K562 (cell line): ENCODE measurements at regions of chr2 and their contacts with region 1.

Region 1: DNA sequence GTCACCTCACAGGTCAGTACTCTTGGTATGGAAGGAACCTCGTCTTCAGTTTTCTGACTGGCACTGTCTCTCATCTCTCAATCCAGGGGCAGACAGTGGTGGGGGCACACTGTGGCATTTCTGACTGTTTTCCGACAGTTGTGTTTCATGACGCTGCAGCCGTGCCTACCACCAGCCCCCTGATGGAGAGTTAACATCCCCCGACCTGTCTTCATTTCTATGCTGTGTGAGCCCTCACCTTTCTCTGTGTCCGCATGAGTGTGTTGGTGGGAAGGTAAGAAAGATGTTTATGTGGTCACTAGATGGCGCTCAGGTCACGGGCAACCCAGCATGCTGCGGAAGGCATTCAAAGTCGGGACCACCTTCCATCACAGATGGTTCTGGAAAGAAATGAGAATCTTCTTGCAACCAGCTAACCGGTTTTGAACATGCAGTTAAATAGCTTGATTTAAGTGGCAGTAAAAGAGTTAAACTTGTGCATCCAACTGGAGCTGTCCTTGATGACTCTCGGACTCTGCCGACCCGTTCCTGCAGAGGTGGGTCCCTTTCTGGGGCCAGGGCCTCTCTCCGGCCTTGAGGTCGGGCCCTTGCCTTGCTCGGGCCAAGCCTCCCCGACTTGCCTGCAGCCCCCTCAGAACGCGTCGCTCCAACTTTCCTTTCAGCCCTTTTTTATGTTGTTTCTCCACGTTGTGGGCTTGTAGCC is 92.4 kb downstream of the DYSF start:
- DNase-seq: peak; percentile 63 to 74 (median 64)
- ATAC-seq: peak; percentile 93
- H3K4me3 ChIP-seq: no peak overlapping the region
- H3K27ac ChIP-seq: no peak overlapping the region
- H3K4me1 ChIP-seq: 0 out of 5 replicates have a peak, but pooled peaks cover 0 to 3% of the 10 kb centered on the region in 2 experiments
- H3K27me3 ChIP-seq: peaks cover 7 to 30% of the 10 kb centered on the region in 2 experiments; a peak in 4 of 5 replicates
- CTCF ChIP-seq: peak; percentile 80 to 89 (median 81)
- EP300 ChIP-seq: no peak
- POLR2A ChIP-seq: no peak
- RAD21 ChIP-seq: peak; percentile 82 to 84

Region 2: DNA sequence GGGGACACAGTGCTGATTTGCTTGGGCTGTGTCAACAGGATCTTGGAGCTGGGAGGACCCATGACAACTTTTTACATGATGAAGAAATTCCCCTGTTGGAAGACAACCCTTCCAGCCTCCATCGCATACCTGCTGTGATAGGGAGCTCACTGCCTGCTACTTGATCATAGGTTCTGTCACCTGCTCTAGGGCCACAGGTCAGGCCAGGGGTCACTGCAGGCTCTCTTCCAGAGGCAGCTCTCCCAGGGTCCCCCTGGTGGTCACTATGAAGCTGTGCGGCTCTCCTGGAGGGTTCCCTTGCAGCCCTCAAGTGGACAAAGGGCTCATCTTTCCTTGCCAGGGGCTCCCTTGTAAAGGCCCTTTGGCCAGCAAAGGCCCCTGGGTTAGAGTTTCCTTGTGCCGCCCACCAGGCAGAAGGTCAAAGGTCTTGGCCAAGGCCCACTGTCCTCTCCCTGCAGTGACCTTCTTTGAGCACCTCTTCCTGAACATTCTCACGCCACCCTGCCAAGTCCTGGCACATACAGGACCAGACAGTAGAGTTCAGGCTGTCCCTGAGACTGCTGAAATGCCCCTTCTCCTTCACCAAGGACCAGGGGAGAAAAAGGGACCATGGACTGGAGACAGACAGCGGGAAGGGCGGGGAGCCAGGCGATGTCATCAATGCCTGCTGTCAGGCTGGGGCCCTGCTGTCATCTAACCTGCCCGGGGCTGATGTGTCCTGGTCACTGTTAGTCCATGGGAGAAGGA is 252.7 kb after region 1 on chr2:
- CTCF ChIA-PET with region 1: interaction called, 5 read pairs
- POLR2A ChIA-PET with region 1: no interaction called
- in situ Hi-C with region 1: no loop called
- intact Hi-C with region 1: loop called (anchors 2 kb)
- DNase-seq: peak; percentile 71 to 87 (median 79)
- ATAC-seq: peak; percentile 97
- H3K4me3 ChIP-seq: no peak overlapping the region
- H3K27ac ChIP-seq: no peak overlapping the region
- H3K4me1 ChIP-seq: no peaks in the 10 kb centered on the region
- H3K27me3 ChIP-seq: peaks cover 0 to 14% of the 10 kb centered on the region in 2 experiments; a peak in 1 of 5 replicates
- CTCF ChIP-seq: peak; percentile 89 to 97 (median 93)
- EP300 ChIP-seq: no peak
- POLR2A ChIP-seq: no peak
- RAD21 ChIP-seq: peak; percentile 83 to 94

Region 3: GRCh38 chr2:72137498-72138010 is 591.8 kb after region 1 on chr2:
- CTCF ChIA-PET with region 1: interaction called, 6 read pairs
- POLR2A ChIA-PET with region 1: no interaction called
- in situ Hi-C with region 1: no loop called
- intact Hi-C with region 1: loop called (anchors 5 kb)
- DNase-seq: peak; percentile 77 to 89 (median 86)
- ATAC-seq: peak; percentile 98
- H3K4me3 ChIP-seq: no peak overlapping the region
- H3K27ac ChIP-seq: no peak overlapping the region
- H3K4me1 ChIP-seq: peaks cover 0 to 14% of the 10 kb centered on the region in 2 experiments; a peak in 2 of 5 replicates
- H3K27me3 ChIP-seq: peaks cover 0 to 29% of the 10 kb centered on the region in 2 experiments; a peak in 2 of 5 replicates
- CTCF ChIP-seq: peak; percentile 90 to 98 (median 98)
- EP300 ChIP-seq: no peak
- POLR2A ChIP-seq: no peak
- RAD21 ChIP-seq: peak; percentile 68 to 83

Region 4: GRCh38 chr2:72278046-72278445 is 732.3 kb after region 1 on chr2:
- CTCF ChIA-PET with region 1: no interaction called
- POLR2A ChIA-PET with region 1: no interaction called
- in situ Hi-C with region 1: no loop called
- intact Hi-C with region 1: no loop called
- DNase-seq: no peak
- ATAC-seq: no peak
- H3K4me3 ChIP-seq: no peak overlapping the region
- H3K27ac ChIP-seq: no peak overlapping the region
- H3K4me1 ChIP-seq: no peaks in the 10 kb centered on the region
- H3K27me3 ChIP-seq: no peaks in the 10 kb centered on the region
- CTCF ChIP-seq: no peak
- EP300 ChIP-seq: no peak
- POLR2A ChIP-seq: no peak
- RAD21 ChIP-seq: no peak

Region 5: DNA sequence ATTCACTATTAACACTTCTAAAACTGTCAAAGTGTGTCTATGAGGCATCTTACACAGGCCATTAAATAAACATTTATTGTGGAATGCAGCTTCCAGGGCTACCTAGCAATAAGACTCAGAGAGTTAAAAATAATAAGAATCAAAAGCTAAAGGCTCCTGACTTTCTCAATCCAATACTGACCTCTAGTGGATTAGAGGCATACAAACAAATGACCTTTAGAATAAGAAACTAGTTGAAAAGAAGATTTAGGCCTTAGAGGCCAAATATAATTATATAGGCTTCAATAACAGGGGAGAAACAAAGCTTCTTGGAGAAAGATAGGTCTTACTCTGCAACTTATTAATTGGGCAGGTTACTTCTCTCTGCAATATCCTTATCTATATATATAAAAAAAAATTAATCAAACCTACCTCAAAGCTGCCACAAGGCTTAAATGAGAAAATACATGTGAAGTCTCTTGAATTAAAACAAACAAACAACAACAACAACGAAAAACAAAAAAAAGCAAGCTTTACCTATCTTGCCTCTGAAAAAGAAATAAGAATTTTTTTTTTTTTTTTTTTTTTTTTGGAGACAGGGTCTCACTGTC is 1034.0 kb after region 1 on chr2:
- CTCF ChIA-PET with region 1: interaction called, 3 read pairs
- POLR2A ChIA-PET with region 1: no interaction called
- in situ Hi-C with region 1: loop called (anchors 25 kb)
- intact Hi-C with region 1: loop called (anchors 10 kb)
- DNase-seq: peak in 3 of 4 experiments; percentile 7 to 62 (median 17)
- ATAC-seq: peak; percentile 77
- H3K4me3 ChIP-seq: no peak overlapping the region
- H3K27ac ChIP-seq: no peak overlapping the region
- H3K4me1 ChIP-seq: no peaks in the 10 kb centered on the region
- H3K27me3 ChIP-seq: no peaks in the 10 kb centered on the region
- CTCF ChIP-seq: peak; percentile 49 to 81 (median 54); a peak in 4 of 6 replicates
- EP300 ChIP-seq: no peak
- POLR2A ChIP-seq: no peak
- RAD21 ChIP-seq: peak; percentile 91 to 94